GM12878 (cell line): ENCODE measurements at regions of chr2 and their contacts with region 1.

Region 1: DNA sequence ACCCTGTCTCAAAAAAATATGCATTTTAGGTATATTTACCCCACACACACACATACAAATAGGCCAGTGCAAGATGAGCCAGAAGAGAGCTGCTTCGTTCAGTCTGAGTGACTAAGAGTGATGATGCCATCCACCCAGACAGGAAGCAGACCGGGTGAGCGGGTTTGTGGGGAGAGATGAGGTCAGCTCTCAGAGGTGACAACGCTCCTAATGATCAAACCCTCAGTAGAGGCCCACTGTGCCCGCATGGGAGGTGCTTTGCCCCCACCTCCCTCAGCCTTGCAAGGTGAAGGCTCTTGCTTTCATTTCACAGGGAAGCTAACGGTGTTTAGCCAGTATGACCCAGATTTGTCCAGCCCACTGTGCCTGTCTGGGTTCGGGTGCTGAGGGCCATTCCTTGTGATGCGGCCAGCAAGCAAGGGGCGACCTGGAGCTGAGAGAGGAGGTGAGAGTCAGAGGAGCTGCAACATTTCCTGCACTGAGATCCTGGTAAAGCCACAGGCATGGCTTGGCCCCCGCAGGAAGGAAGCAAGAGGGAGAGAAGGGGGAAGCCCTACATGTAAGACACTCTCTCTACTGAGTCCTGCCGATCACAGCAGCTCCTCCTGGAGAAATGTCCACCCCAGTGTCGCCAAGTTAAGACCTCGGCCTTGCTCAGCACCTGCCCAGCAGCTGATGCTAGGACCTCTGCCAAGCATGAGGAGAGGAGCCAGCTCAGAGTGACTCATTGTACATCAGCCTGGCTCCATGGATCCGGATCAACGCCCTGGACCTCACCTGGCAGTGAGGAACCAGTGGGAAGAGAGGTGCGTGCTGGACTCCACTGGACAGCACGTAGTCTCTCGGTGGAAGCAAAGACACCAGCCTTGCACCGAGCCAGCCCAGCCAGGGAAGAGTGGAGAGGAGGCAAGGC is 37.0 kb downstream of the NIFK start:
- DNase-seq: peak; percentile 60
- ATAC-seq: peak; percentile 99
- H3K4me3 ChIP-seq: no peak overlapping the region; the same call in 1 of the 2 replicates
- H3K27ac ChIP-seq: peak overlapping the region; percentile 22
- H3K4me1 ChIP-seq: peaks cover 15% of the 10 kb centered on the region
- H3K27me3 ChIP-seq: no peaks in the 10 kb centered on the region
- CTCF ChIP-seq: no peak
- EP300 ChIP-seq: no peak; a peak in 1 of 4 replicates
- POLR2A ChIP-seq: peak; percentile 47; the same call in 1 of the 2 replicates
- RAD21 ChIP-seq: no peak

Region 2: DNA sequence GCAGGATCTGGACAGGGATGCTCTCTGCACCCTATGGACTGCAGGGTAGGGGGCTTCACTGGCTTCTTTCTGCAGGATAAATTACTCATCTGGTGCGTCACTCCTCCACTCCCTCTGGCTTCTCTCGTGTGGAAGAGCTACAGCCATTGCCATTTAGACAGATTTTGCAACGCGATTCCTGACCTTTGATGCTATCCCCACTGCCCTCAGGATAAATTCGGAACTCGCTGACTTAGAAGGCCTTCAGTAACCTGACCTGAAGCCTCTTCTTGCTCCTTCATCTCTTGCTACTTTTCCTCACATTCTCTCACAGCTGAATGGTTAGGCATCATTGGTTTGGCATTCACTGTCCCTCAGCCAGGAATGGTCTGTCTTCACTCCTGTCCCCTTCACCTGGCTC is 31.7 kb after region 1 on chr2:
- CTCF ChIA-PET with region 1: no interaction called
- POLR2A ChIA-PET with region 1: no interaction called
- RAD21 ChIA-PET with region 1: no interaction called
- SMC1A ChIA-PET with region 1: no interaction called
- in situ Hi-C with region 1: no loop called
- intact Hi-C with region 1: no loop called
- DNase-seq: no peak
- ATAC-seq: no peak
- H3K4me3 ChIP-seq: no peak overlapping the region
- H3K27ac ChIP-seq: no peak overlapping the region
- H3K4me1 ChIP-seq: no peaks in the 10 kb centered on the region; the same call in 1 of the 2 replicates
- H3K27me3 ChIP-seq: no peaks in the 10 kb centered on the region
- CTCF ChIP-seq: no peak
- EP300 ChIP-seq: no peak
- POLR2A ChIP-seq: no peak
- RAD21 ChIP-seq: no peak

Region 3: DNA sequence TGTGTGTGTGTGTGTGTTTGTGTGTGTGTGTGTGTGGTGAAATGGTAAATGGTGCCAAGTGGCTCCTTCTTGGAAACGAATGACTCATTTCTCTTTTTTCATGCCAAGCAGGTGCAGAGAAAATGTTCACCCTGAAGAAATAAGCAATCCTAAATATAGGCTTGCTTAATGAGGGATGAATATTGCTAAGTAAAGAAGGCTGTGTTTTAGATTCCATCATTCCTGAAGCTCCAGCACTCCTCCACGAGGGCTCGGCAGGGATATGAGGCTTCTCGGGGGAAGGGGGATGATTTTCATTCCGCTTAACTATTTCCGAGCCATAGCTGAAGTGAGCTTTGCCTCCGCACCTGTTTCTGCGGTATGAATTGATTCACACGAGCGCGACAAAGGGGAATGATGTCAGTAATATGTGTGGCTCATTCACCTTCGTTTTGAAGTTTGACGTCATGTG is 128.6 kb after region 1 on chr2:
- CTCF ChIA-PET with region 1: no interaction called
- POLR2A ChIA-PET with region 1: interaction called, 10 read pairs
- RAD21 ChIA-PET with region 1: no interaction called
- SMC1A ChIA-PET with region 1: no interaction called
- in situ Hi-C with region 1: no loop called
- intact Hi-C with region 1: no loop called
- DNase-seq: no peak
- ATAC-seq: no peak
- H3K4me3 ChIP-seq: no peak overlapping the region
- H3K27ac ChIP-seq: no peak overlapping the region
- H3K4me1 ChIP-seq: peaks cover under 1% of the 10 kb centered on the region
- H3K27me3 ChIP-seq: no peaks in the 10 kb centered on the region
- CTCF ChIP-seq: no peak
- EP300 ChIP-seq: no peak
- POLR2A ChIP-seq: no peak
- RAD21 ChIP-seq: no peak